AG04450 (cell line): ENCODE measurements at regions of chr11 and their contacts with region 1.

Region 1: GRCh38 chr11:66222358-66223149 is 45.9 kb upstream of the RAB1B start:
- DNase-seq: peak; percentile 75
- H3K4me3 ChIP-seq: no peak overlapping the region
- H3K27ac ChIP-seq: no peak overlapping the region
- H3K27me3 ChIP-seq: no peaks in the 10 kb centered on the region
- CTCF ChIP-seq: peak; percentile 100

Region 2: GRCh38 chr11:66159324-66159984 is 63.1 kb before region 1 on chr11:
- CTCF ChIA-PET with region 1: interaction called, 14 read pairs
- POLR2A ChIA-PET with region 1: no interaction called
- DNase-seq: no peak
- H3K4me3 ChIP-seq: no peak overlapping the region
- H3K27ac ChIP-seq: no peak overlapping the region
- H3K27me3 ChIP-seq: no peaks in the 10 kb centered on the region
- CTCF ChIP-seq: no peak

Region 3: GRCh38 chr11:66235141-66235540 is 12.6 kb after region 1 on chr11:
- CTCF ChIA-PET with region 1: interaction called, 15 read pairs
- POLR2A ChIA-PET with region 1: no interaction called
- DNase-seq: no peak
- H3K4me3 ChIP-seq: no peak overlapping the region
- H3K27ac ChIP-seq: no peak overlapping the region
- H3K27me3 ChIP-seq: no peaks in the 10 kb centered on the region
- CTCF ChIP-seq: no peak

Region 4: DNA sequence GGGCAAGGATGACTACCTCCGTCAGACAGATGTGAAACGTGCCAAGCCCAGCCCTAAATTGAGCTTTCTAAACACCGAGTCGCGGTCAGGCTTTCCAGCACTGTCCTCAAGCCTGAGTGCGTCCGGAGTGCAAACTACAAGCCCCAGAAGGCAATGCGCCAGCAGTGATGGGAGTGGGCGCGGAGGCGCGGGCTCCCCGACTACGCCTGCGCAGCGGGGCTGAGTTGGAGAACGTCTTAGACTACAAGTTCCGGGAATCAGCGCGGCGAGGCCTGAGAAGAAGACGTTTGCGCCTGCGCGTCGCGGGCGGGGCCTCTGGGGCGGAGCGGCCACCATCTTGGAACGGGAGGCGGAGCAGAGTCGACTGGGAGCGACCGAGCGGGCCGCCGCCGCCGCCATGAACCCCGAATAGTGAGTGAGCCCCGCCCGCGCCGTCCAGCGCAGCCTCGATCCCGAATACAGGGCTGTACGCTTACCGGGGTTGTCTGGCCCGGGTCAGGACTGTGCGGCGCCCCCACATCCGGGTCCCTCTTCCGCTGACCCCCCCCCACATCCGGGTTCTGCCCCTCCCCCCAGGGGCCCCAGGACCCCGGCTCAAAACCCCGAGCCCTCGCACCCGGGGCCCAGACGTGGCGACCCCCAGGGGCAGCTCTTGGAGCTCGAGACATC is 45.9 kb after region 1 on chr11 and contains the start of gene RAB1B:
- CTCF ChIA-PET with region 1: interaction called, 10 read pairs
- POLR2A ChIA-PET with region 1: interaction called, 3 read pairs
- DNase-seq: peak; percentile 98
- H3K4me3 ChIP-seq: peak within 1 kb of the TSS; percentile 91
- H3K27ac ChIP-seq: peak within 1 kb of the TSS; percentile 89
- H3K27me3 ChIP-seq: no peaks in the 10 kb centered on the region
- CTCF ChIP-seq: no peak
- polyA plus RNA-seq, gene RAB1B: 127 and 183 TPM in 2 replicates

Region 5: GRCh38 chr11:66386171-66387069 is 163.9 kb after region 1 on chr11:
- CTCF ChIA-PET with region 1: interaction called, 11 read pairs
- POLR2A ChIA-PET with region 1: no interaction called
- DNase-seq: peak; percentile 66
- H3K4me3 ChIP-seq: peak overlapping the region; percentile 41
- H3K27ac ChIP-seq: no peak overlapping the region
- H3K27me3 ChIP-seq: no peaks in the 10 kb centered on the region
- CTCF ChIP-seq: peak; percentile 95